Aorta (tissue), 5 donors: ENCODE measurements at regions of chr7 and their contacts with region 1.

Region 1: GRCh38 chr7:139645572-139646523 is 122.4 kb downstream of the CLEC2L start:
- DNase-seq: peak; percentile 87 to 94
- ATAC-seq: peak; percentile 84
- H3K4me3 ChIP-seq: no peak overlapping the region
- H3K27ac ChIP-seq: peak overlapping the region in 1 of 2 donors; percentile 43
- H3K4me1 ChIP-seq: peaks cover 0 to 1% of the 10 kb centered on the region in 2 donors
- H3K27me3 ChIP-seq: no peaks in the 10 kb centered on the region

Region 2: GRCh38 chr7:139680676-139681462 is 35.0 kb after region 1 on chr7:
- intact Hi-C with region 1: loop called in 1 of 2 experiments (anchors 5 kb)
- DNase-seq: peak; percentile 87 to 94
- ATAC-seq: peak; percentile 84
- H3K4me3 ChIP-seq: no peak overlapping the region
- H3K27ac ChIP-seq: peak overlapping the region; percentile 80 to 95
- H3K4me1 ChIP-seq: peaks cover 0 to 16% of the 10 kb centered on the region in 2 donors
- H3K27me3 ChIP-seq: no peaks in the 10 kb centered on the region